ENCODE measurements at regions of chr2 and their contacts with region 1.

Region 1: GRCh38 chr2:73907840-73908452 is 15.1 kb downstream of the ACTG2 start:
- DNase-seq: peak; percentile 77
- ATAC-seq: peak; percentile 96
- H3K4me3 Mint-ChIP-seq: no peak overlapping the region
- H3K27ac Mint-ChIP-seq: no peak overlapping the region
- H3K4me1 Mint-ChIP-seq: peaks cover 7% of the 10 kb centered on the region
- H3K27me3 Mint-ChIP-seq: no peaks in the 10 kb centered on the region

Region 2: GRCh38 chr2:74104839-74105238 is 196.9 kb after region 1 on chr2:
- CTCF ChIA-PET with region 1: interaction called, 3 read pairs
- POLR2A ChIA-PET with region 1: no interaction called
- intact Hi-C with region 1: loop called in 1 of 2 experiments (anchors 10 kb)
- DNase-seq: no peak
- ATAC-seq: no peak
- H3K4me3 Mint-ChIP-seq: no peak overlapping the region
- H3K27ac Mint-ChIP-seq: no peak overlapping the region
- H3K4me1 Mint-ChIP-seq: no peaks in the 10 kb centered on the region
- H3K27me3 Mint-ChIP-seq: no peaks in the 10 kb centered on the region

Region 3: DNA sequence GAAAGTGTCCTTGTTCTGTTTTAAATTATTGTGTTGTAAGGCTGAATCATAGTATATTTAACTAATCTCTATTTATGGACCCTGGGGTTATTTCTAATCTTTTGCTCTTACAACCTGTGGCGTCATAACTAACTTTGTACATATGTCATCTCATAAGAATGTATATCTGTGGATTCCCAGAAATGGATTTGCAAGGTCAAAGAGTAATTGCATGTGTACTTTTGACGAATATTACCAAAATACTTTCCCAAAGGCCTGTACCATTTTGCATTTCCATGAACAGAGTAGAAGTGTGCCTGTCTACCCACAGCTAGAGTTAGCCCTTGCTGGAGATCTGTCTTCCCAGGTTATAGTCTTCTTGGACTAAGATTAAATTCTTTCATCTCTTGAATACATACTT is 788.9 kb after region 1 on chr2:
- CTCF ChIA-PET with region 1: no interaction called
- POLR2A ChIA-PET with region 1: no interaction called
- intact Hi-C with region 1: no loop called
- DNase-seq: no peak
- ATAC-seq: no peak
- H3K4me3 Mint-ChIP-seq: no peak overlapping the region
- H3K27ac Mint-ChIP-seq: no peak overlapping the region
- H3K4me1 Mint-ChIP-seq: no peaks in the 10 kb centered on the region
- H3K27me3 Mint-ChIP-seq: no peaks in the 10 kb centered on the region